Posterior vena cava (tissue), 2 donors: ENCODE measurements at regions of chr2 and their contacts with region 1.

Region 1: GRCh38 chr2:25177211-25177611 is 8.8 kb upstream of the POMC start:
- DNase-seq: no peak

Region 2: DNA sequence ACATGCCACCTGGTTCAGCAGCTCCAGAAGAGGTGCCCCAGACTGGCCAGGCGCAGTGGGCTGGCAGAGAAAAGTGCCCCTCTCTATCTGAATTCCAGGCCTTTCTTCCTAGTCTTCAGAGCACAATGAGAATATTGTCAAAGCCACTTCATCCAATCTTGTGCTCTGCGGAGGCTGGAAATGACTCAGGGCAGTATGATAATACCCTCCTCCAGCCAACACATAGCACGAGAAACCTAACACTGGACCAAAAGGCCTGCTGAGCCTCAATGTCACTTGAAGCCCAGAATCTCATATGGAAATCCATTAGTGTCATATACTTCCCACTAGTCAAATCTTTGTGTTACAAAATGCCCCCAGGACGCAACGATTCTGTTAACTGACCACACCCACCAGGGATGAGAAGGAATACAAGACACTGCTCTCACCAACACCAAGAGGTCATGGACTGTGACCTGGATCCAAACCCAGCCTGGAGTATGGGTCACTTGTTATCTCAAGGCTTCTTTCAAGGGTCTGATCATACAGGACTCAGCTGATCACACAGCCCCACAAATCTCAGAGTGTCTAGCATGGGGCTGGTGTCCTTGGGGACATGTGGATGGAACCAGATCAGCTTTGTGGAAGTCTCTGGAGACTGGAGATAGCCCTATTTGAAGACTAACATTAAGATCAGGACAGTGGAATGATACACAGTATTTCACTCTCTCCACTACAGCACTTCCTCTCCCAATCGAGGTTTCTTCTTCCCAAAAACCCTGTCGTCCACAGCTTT is 795.0 kb after region 1 on chr2:
- intact Hi-C with region 1: loop called in 1 of 2 experiments (anchors 5 kb)
- DNase-seq: peak; percentile 18